ENCODE measurements at regions of chr7 and their contacts with region 1.

Region 1: DNA sequence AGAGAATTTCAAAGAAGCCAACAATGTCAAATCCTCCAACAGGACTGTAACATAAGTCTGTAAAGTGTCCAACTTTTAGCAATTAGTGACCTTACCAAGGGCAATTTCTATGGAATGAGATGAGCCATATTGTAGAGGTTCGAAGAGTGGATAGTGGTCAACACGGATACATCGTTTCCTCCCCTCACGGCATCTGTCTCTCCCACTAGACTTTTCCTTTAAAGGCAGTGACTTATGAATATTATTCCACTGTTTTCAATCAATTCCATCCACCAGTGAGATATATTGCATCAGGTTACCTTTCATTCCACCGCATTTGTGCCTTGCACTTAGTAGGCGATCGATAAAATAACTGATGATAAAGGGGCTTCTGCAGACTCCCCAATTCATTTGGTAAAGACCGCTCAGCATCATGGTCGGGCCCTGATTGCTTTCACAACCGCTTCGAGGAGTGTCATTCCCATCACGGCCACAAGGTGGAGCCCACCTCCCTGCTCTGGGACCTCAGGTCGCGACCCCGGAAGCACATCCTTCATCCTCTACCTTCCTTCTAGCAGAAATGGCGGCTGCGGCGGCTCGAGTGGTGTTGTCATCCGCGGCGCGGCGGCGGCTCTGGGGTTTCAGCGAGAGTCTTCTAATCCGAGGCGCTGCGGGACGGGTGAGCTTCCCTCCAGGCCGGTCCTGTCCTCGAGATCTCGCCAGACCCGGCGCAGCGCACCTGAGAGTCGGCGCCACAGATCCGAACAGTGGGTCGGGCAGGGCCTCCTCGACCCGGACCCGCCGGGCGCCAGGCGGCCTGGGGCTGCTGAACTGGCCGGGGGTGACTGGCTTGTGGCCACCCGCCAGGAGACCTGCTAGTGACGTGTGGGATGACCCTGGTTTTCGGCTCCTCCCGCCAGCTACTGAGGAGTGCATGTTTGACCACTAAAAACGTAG is at the start of gene PMPCB:
- DNase-seq: peak; percentile 72
- ATAC-seq: peak; percentile 93
- H3K4me3 ChIP-seq: peak within 1 kb of the TSS; percentile 71
- H3K27ac ChIP-seq: peak within 1 kb of the TSS; percentile 76
- H3K4me1 ChIP-seq: peaks cover 3% of the 10 kb centered on the region; the same call in 1 of the 2 replicates
- H3K27me3 ChIP-seq: no peaks in the 10 kb centered on the region
- CTCF ChIP-seq: peak; percentile 92 to 98 (median 95); a peak in 5 of 6 replicates
- EP300 ChIP-seq: no peak
- POLR2A ChIP-seq: peak; percentile 94
- RAD21 ChIP-seq: peak; percentile 79
- polyA plus RNA-seq, gene PMPCB: 150 to 163 TPM

Region 2: GRCh38 chr7:103154042-103154441 is 143.1 kb before region 1 on chr7:
- CTCF ChIA-PET with region 1: no interaction called
- POLR2A ChIA-PET with region 1: no interaction called
- RAD21 ChIA-PET with region 1: no interaction called
- SMC1A ChIA-PET with region 1: no interaction called
- in situ Hi-C with region 1: no loop called
- intact Hi-C with region 1: no loop called
- DNase-seq: no peak
- ATAC-seq: no peak
- H3K4me3 ChIP-seq: no peak overlapping the region
- H3K27ac ChIP-seq: no peak overlapping the region
- H3K4me1 ChIP-seq: no peaks in the 10 kb centered on the region
- H3K27me3 ChIP-seq: no peaks in the 10 kb centered on the region
- CTCF ChIP-seq: no peak
- EP300 ChIP-seq: no peak
- POLR2A ChIP-seq: no peak
- RAD21 ChIP-seq: no peak

Region 3: GRCh38 chr7:103413407-103413806 is 116.2 kb after region 1 on chr7:
- CTCF ChIA-PET with region 1: interaction called, 4 read pairs
- POLR2A ChIA-PET with region 1: no interaction called
- RAD21 ChIA-PET with region 1: no interaction called
- SMC1A ChIA-PET with region 1: interaction called, 28 read pairs
- in situ Hi-C with region 1: loop called (anchors 5 kb)
- intact Hi-C with region 1: no loop called
- DNase-seq: no peak
- ATAC-seq: no peak
- H3K4me3 ChIP-seq: no peak overlapping the region
- H3K27ac ChIP-seq: no peak overlapping the region
- H3K4me1 ChIP-seq: no peaks in the 10 kb centered on the region
- H3K27me3 ChIP-seq: no peaks in the 10 kb centered on the region; a peak in 1 of 4 replicates
- CTCF ChIP-seq: no peak
- EP300 ChIP-seq: no peak
- POLR2A ChIP-seq: no peak
- RAD21 ChIP-seq: no peak

Region 4: DNA sequence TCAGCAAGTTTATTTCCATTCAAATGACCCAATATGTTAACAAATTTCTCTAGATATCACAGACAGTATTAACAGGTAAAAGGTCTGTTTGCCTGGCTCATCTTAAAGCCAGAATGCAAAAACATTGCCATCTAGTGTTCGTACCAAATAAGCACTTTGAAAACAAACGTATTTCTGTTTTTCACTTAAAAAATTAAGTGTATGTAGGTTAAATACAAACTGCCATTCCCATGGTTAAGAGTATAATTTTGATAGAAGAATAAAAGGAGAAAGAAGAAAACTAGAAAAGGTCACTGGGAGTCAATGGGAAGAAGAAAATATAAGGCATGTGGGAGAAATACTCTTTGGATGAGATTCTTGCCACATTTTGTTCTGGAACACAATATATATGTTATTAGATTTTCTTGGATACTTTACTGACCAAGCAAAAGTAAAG is 859.7 kb after region 1 on chr7:
- CTCF ChIA-PET with region 1: no interaction called
- POLR2A ChIA-PET with region 1: no interaction called
- RAD21 ChIA-PET with region 1: no interaction called
- SMC1A ChIA-PET with region 1: no interaction called
- in situ Hi-C with region 1: loop called (anchors 25 kb)
- intact Hi-C with region 1: no loop called
- DNase-seq: no peak
- ATAC-seq: peak; percentile 42; the same call in 1 of the 3 replicates
- H3K4me3 ChIP-seq: no peak overlapping the region
- H3K27ac ChIP-seq: no peak overlapping the region
- H3K4me1 ChIP-seq: no peaks in the 10 kb centered on the region
- H3K27me3 ChIP-seq: no peaks in the 10 kb centered on the region
- CTCF ChIP-seq: peak; percentile 50 to 59 (median 56); a peak in 5 of 6 replicates
- EP300 ChIP-seq: no peak
- POLR2A ChIP-seq: no peak
- RAD21 ChIP-seq: peak; percentile 55